ENCODE measurements at regions of chr9 and their contacts with region 1.

Region 1: DNA sequence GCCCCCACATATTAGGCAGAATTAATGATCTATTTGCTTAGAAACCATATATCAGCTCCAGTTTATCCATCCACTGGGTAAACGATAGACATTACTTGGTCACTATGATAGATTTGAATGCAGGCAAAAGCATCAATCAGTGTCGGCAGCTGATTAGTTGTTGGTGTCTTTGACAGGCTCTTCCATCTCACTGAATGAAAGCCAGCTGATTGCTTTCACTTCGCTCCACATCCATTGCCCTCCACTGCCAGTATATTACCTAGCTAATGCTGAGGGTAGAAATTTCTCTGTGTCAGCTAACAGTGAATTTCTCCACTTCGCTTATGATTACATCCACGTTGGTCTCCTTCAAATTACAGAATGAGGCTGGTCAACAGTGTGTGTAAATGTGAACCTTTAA is 821.3 kb upstream of the TYRP1 start:
- DNase-seq: no peak
- ATAC-seq: no peak
- H3K4me3 Mint-ChIP-seq: no peak overlapping the region
- H3K27ac Mint-ChIP-seq: no peak overlapping the region
- H3K4me1 Mint-ChIP-seq: no peaks in the 10 kb centered on the region
- H3K27me3 Mint-ChIP-seq: no peaks in the 10 kb centered on the region

Region 2: DNA sequence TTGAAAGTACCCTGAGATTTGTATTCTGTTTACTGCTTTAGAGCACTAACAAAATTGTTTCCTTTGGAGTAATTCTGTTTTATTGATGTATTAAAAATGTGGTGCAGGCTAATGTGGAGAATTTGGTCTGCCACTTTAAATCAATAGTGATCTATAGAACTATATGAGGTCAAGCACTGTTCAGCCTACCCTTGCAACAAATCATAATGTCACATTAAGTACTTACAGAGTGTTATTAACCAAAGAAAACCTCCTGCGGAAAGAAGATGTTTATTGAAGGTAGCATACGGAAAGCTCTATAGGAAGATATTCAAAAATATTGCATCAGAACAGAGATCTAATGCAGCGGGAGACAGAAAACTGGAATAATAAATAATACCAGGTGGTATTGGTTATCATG is 43.7 kb before region 1 on chr9:
- CTCF ChIA-PET with region 1: no interaction called
- POLR2A ChIA-PET with region 1: no interaction called
- intact Hi-C with region 1: loop called in 1 of 2 experiments (anchors 5 kb)
- DNase-seq: no peak
- ATAC-seq: no peak
- H3K4me3 Mint-ChIP-seq: no peak overlapping the region
- H3K27ac Mint-ChIP-seq: no peak overlapping the region
- H3K4me1 Mint-ChIP-seq: no peaks in the 10 kb centered on the region
- H3K27me3 Mint-ChIP-seq: no peaks in the 10 kb centered on the region